ENCODE measurements at regions of chr19 and their contacts with region 1.

Region 1: DNA sequence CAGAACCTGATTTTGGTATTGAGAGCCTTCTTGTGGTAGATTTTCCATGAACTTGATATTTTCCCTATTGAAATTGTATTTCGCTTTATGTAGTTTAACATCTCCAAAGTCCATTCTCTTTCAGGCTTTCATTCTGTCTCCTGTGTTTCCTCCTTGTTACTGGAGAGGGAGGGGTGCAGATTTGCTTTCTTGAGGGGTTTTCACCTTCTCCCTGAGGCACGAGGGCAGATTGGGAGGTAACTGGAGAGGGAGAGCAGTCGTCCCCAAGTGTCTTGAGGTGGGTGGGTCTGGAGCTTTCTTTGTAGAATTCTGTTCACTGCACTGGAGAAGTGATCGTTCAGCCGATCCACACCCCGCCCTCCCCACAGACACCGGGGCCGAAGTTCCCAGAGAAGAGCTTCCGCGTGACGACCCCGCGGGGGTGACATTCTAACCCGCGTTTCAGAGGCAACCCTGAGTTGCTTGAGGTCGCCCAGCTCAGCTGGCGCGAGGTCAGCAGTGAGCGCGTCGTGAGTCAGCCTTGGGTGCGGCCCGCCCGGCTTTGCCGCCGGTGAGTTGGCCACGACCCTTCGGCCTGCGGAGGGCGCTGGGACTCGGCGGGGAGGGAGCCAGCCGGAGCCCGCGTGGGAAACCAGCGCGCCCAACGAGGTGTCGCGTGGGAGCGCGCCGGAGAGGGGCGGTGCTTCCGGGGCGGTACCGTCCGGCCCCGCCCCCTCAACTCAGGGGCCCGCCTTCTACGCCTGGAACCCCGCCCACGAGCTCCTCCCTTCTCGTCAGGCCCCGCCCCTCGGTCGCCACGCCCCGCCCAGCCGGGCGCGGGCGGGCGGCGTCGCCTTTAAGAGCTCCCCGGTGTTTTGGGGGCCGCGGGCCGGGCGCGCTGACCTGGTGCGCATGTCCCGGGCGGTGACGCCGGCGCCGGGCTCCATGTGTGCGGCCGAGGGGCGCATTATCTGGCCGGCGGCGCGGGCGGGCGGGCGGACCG is at the start of gene GATAD2A:
- DNase-seq: peak; percentile 97
- ATAC-seq: peak; percentile 98
- total RNA-seq, gene GATAD2A: 57.7 TPM

Region 2: GRCh38 chr19:19361075-19361594 is 44.0 kb before region 1 on chr19:
- intact Hi-C with region 1: no loop called
- DNase-seq: peak; percentile 87
- ATAC-seq: peak; percentile 86

Region 3: GRCh38 chr19:19459707-19460251 is 54.6 kb after region 1 on chr19:
- intact Hi-C with region 1: loop called (anchors 10 kb)
- DNase-seq: no peak
- ATAC-seq: no peak

Measured in sciatic nerve (tissue), 2 donors.